Psoas muscle (tissue), 8 donors: ENCODE measurements at regions of chr5 and their contacts with region 1.

Region 1: DNA sequence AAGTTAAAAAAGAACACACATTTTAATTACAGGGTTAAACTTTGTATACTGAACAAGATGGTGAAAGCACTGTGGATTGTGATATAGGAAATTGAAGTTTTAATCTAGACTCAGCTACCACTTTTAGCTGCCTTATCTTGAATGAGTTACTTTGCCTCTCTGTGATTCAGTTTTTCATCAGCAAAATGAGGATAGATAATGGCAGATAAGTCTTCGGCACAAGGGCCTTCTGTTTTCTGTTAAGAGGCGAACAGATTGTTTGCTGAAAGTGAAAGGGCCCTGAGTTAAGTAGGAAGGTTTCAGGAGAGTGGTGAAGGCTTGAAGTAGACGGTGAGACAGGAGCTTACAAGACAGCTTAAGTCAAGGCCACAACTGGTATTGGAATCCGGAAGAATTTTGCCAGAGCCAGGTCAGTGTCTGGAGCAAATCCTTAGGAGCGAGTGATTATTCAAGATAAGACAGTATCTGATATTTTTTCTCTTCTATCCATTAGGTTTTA is 7.8 kb downstream of the RARS1 start:
- DNase-seq: no peak
- ATAC-seq: no peak
- H3K4me3 ChIP-seq: no peak overlapping the region
- H3K27ac ChIP-seq: no peak overlapping the region
- H3K4me1 ChIP-seq: no peaks in the 10 kb centered on the region
- H3K27me3 ChIP-seq: no peaks in the 10 kb centered on the region
- CTCF ChIP-seq: no peak

Region 2: GRCh38 chr5:168328814-168329213 is 165.3 kb before region 1 on chr5:
- intact Hi-C with region 1: no loop called
- DNase-seq: no peak
- ATAC-seq: no peak
- H3K4me3 ChIP-seq: no peak overlapping the region
- H3K27ac ChIP-seq: no peak overlapping the region
- H3K4me1 ChIP-seq: no peaks in the 10 kb centered on the region
- H3K27me3 ChIP-seq: peaks cover 0 to 11% (median 0%) of the 10 kb centered on the region in 3 donors
- CTCF ChIP-seq: no peak

Region 3: DNA sequence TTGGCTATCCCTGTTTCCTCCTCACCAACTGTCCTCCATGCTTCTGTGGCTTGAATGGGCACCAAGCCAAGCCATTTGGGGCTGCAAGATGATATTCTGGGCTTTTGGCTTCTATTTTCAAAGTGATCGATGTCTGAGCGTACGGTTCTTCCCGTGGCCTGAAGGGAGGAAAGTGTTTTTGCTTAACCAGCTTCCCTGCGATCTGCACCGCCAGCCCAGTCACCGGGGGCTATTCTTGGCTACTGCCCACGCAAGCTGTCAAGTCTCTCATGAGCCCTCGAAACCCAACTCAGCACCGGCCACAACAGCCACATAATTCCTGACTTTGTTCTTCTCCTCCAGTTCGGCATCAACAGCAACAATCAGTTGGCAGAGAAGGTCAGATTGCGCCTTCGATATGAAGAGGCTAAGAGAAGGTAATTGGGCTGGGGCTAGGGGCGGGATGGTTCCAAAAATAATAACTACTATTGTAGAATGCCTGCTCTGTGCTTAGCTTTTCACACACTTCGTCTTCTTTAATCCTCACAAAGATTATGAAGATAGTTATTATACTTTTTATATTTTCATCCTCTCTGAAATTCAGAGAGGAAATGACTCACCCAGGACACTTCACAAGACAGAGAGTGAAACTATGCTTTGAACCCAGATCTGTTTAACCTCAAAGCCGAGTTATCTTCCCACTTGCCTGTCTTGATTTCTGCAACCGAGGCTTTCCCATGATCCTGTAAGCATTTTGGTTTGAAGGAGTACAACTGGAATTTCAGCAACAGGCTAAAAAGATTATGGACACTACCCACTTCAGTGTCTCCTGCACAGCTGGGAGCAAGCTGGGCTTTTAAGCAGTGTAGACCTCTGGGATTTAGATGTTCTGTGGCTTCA is 84.3 kb before region 1 on chr5:
- intact Hi-C with region 1: no loop called
- DNase-seq: no peak
- ATAC-seq: no peak
- H3K4me3 ChIP-seq: no peak overlapping the region
- H3K27ac ChIP-seq: no peak overlapping the region
- H3K4me1 ChIP-seq: no peaks in the 10 kb centered on the region
- H3K27me3 ChIP-seq: peaks cover 0 to 4% (median 0%) of the 10 kb centered on the region in 3 donors
- CTCF ChIP-seq: no peak

Region 4: GRCh38 chr5:168513861-168514428 is 19.8 kb after region 1 on chr5:
- intact Hi-C with region 1: loop called in 1 of 2 experiments (anchors 2 kb)
- DNase-seq: no peak
- ATAC-seq: no peak
- H3K4me3 ChIP-seq: no peak overlapping the region
- H3K27ac ChIP-seq: no peak overlapping the region
- H3K4me1 ChIP-seq: no peaks in the 10 kb centered on the region
- H3K27me3 ChIP-seq: no peaks in the 10 kb centered on the region
- CTCF ChIP-seq: no peak

Region 5: DNA sequence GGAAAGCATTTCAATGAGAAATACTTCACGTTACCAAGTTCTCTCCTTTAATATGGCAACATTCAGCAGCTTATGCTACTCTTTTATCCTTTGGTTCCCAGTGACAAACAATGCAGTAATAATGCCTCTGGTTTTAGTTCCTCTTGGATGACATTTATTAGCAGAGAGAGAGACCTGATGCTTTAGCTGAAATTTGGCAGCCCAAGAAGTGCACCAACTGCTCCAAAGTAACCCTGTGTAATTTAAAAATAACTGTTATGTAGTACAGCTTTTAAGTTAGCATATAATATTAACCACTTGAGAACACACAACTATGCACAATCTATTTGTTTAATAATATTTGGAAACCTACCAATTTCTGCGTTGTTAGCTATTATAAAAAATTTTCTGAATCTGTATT is 63.3 kb after region 1 on chr5:
- intact Hi-C with region 1: loop called in 1 of 2 experiments (anchors 5 kb)
- DNase-seq: no peak
- ATAC-seq: peak in 2 of 4 donors; percentile 38 to 58
- H3K4me3 ChIP-seq: no peak overlapping the region
- H3K27ac ChIP-seq: no peak overlapping the region
- H3K4me1 ChIP-seq: peaks cover 2% of the 10 kb centered on the region
- H3K27me3 ChIP-seq: no peaks in the 10 kb centered on the region
- CTCF ChIP-seq: no peak